ENCODE measurements at regions of chr13 and their contacts with region 1.

Region 1: DNA sequence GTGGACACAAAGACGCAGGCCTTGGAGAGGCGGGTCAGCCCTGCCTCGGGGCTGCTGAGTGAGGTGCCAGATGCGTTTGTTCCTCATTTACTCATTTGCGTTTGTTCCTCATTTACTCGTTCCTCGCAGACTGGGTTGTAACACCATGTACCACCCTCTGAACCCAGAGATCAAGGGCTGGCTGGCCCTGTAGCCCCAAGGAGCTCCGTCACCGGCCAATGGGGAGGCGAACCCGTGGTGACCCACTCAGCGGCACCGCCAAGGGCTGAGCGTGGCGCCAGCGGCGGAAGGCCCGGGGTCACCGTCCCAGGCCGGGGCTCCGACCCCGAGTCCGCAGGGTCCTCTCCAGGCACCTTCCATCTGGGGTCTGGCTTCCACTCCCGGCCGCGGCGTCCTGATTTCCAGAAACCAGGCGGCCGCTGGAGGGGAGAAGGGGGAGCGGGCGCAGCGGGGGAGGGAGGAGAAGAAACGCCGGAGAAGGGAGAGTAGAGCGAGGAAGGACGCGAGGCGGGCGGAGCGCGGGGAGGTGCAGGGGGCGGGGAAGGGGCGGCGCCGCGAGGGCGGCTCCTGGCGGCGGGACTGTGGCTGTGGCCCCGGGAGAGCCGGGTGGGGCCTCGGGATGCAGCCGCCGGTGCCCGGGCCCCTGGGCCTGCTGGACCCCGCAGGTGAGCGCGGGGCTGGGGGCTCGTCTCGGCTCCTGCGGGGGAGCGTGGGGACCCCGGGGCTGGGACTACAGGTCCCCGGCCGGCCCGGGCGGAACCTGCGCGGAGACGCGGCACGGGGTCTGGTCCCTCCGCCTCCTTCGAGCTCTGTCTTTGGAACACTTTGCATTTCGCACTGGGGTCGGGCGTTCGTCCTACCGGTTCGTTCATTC is at the start of gene TMEM255B:
- DNase-seq: peak; percentile 35 to 80 (median 62)
- ATAC-seq: peak; percentile 93
- H3K4me3 ChIP-seq: peak within 1 kb of the TSS; percentile 62
- H3K4me3 Mint-ChIP-seq: peak within 1 kb of the TSS; percentile 84 to 97 (median 92)
- H3K27ac ChIP-seq: no peak within 1 kb of the TSS
- H3K27ac Mint-ChIP-seq: peak within 1 kb of the TSS in 4 of 9 donors; percentile 35 to 84 (median 59)
- H3K4me1 ChIP-seq: peaks cover 6 to 14% of the 10 kb centered on the region in 2 donors
- H3K4me1 Mint-ChIP-seq: peaks cover 13 to 21% (median 16%) of the 10 kb centered on the region in 7 donors
- H3K27me3 ChIP-seq: peaks cover 4 to 14% of the 10 kb centered on the region in 2 donors
- H3K27me3 Mint-ChIP-seq: peaks cover 37 to 63% (median 51%) of the 10 kb centered on the region in 5 donors
- total RNA-seq, gene TMEM255B: 0.62 to 3.3 (median 1.6) TPM

Region 2: GRCh38 chr13:113592571-113592970 is 166.3 kb before region 1 on chr13:
- CTCF ChIA-PET with region 1: no interaction called
- POLR2A ChIA-PET with region 1: no interaction called
- intact Hi-C with region 1: no loop called
- DNase-seq: no peak
- ATAC-seq: no peak
- H3K4me3 ChIP-seq: no peak overlapping the region
- H3K4me3 Mint-ChIP-seq: no peak overlapping the region
- H3K27ac ChIP-seq: no peak overlapping the region
- H3K27ac Mint-ChIP-seq: peak overlapping the region in 1 of 9 donors; percentile 17
- H3K4me1 ChIP-seq: peaks cover 0 to 7% of the 10 kb centered on the region in 2 donors
- H3K4me1 Mint-ChIP-seq: peaks cover 16 to 34% (median 22%) of the 10 kb centered on the region in 7 donors
- H3K27me3 ChIP-seq: no peaks in the 10 kb centered on the region
- H3K27me3 Mint-ChIP-seq: no peaks in the 10 kb centered on the region

Region 3: DNA sequence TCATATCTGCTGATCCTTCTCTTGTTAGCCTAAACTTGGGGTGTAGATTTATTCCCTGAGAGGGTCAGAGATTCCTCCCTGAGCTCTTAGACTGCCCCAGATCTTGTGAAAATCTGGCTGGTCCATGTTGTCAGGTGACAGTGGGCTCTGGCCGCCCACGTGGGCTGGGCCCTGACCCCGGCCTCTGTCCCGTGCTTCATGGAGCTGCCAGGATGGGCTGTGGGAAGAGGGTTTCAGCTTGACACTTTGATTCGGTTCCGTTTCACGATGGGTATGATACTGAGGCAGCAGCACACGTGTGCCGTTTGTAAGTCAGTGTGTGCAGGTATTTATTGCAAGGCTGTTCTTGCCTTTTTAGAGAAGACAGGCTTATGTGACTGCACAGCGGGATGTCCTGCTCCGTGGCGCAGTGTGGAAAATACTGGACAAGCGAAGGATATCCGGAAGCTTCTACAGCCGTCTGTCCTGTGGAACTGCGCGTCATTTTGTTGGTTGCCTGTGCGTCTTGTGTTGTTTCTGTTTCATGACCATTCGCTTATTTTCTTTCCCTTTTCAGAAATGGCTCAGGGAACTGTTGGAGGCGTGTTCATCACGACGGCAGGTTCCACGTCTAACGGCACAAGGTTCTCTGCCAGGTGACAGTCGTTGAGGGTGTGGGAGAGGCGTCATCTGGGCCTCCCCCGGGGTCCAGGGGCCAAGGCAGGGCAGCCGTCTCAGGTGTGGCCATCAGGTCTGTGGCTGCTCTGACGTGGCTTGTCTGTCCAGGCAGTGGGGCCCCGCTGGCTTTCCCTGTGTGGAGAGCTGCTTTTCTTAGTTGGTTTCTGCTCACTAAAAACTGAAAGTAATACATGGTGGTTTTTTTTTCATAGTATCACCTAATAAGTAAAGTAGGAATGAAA is 121.4 kb before region 1 on chr13:
- CTCF ChIA-PET with region 1: no interaction called
- POLR2A ChIA-PET with region 1: no interaction called
- intact Hi-C with region 1: no loop called
- DNase-seq: no peak
- ATAC-seq: no peak
- H3K4me3 ChIP-seq: no peak overlapping the region
- H3K4me3 Mint-ChIP-seq: no peak overlapping the region
- H3K27ac ChIP-seq: no peak overlapping the region
- H3K27ac Mint-ChIP-seq: peak overlapping the region in 7 of 9 donors; percentile 42 to 95 (median 81)
- H3K4me1 ChIP-seq: peaks cover 0 to 27% of the 10 kb centered on the region in 2 donors
- H3K4me1 Mint-ChIP-seq: peaks cover 8 to 49% (median 31%) of the 10 kb centered on the region in 7 donors
- H3K27me3 ChIP-seq: no peaks in the 10 kb centered on the region
- H3K27me3 Mint-ChIP-seq: no peaks in the 10 kb centered on the region

Region 4: GRCh38 chr13:113742000-113742441 is 16.9 kb before region 1 on chr13:
- CTCF ChIA-PET with region 1: no interaction called
- POLR2A ChIA-PET with region 1: no interaction called
- intact Hi-C with region 1: loop called in 1 of 2 experiments (anchors 2 kb)
- DNase-seq: peak in 2 of 9 donors; percentile 19 to 22
- ATAC-seq: peak; percentile 85
- H3K4me3 ChIP-seq: no peak overlapping the region
- H3K4me3 Mint-ChIP-seq: peak overlapping the region; percentile 5 to 76 (median 62)
- H3K27ac ChIP-seq: no peak overlapping the region
- H3K27ac Mint-ChIP-seq: peak overlapping the region in 2 of 9 donors; percentile 13 to 30
- H3K4me1 ChIP-seq: peaks cover 0 to 19% of the 10 kb centered on the region in 2 donors
- H3K4me1 Mint-ChIP-seq: peaks cover 9 to 29% (median 25%) of the 10 kb centered on the region in 7 donors
- H3K27me3 ChIP-seq: no peaks in the 10 kb centered on the region
- H3K27me3 Mint-ChIP-seq: peaks cover 5 to 36% (median 19%) of the 10 kb centered on the region in 5 donors

Region 5: GRCh38 chr13:114212158-114212495 is 453.2 kb after region 1 on chr13:
- CTCF ChIA-PET with region 1: no interaction called
- POLR2A ChIA-PET with region 1: no interaction called
- intact Hi-C with region 1: no loop called
- DNase-seq: no peak
- ATAC-seq: no peak
- H3K4me3 ChIP-seq: no peak overlapping the region
- H3K4me3 Mint-ChIP-seq: peak overlapping the region in 3 of 10 donors; percentile 2 to 23 (median 14)
- H3K27ac ChIP-seq: no peak overlapping the region
- H3K27ac Mint-ChIP-seq: peak overlapping the region in 6 of 9 donors; percentile 18 to 62 (median 48)
- H3K4me1 ChIP-seq: no peaks in the 10 kb centered on the region
- H3K4me1 Mint-ChIP-seq: peaks cover 3 to 45% (median 23%) of the 10 kb centered on the region in 7 donors
- H3K27me3 ChIP-seq: no peaks in the 10 kb centered on the region
- H3K27me3 Mint-ChIP-seq: peaks cover 0 to 44% (median 0%) of the 10 kb centered on the region in 5 donors

Measured in naive thymus-derived CD4-positive, alpha-beta T cell (primary cell).